ENCODE measurements at regions of chr2 and their contacts with region 1.

Region 1: DNA sequence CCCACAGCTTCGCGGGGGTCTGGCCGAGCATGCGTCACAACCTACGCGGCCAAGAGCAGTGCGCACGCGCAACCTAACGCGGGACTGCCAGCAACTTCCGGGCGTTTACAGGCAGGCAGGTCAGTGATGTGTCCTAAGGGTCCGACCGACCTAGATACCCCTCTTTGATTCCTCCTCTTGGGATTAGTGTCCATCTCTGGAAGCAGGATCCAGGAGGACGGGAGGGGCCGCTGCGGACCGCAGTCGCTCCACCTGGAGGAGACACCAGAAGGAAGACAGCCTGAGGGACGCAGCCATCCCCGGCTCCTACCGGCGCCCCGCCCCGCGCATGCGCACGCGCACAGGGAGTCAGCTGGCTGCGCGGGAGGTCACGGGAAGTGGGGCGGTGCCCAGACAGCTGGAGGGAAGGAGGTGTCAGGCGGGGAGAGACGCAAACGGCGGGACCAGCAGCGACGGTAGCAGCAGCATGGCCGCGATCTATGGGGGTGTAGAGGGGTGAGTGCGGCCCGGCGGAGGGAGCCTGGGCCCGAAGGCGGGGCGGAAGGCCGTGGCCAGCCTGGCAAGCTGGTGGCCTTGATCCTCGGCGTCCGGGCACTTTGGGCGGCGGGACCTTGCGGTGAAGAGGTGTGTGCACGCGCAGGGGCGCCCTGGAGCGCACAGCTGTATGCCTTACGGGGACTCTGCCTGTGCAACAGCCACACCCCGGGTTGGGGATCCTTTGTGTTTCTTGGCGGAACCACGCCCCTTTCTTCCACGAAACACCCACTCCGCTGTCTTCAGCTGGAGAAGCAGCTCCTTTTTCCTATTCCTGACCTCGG is at the start of gene NAGK:
- DNase-seq: peak; percentile 99
- ATAC-seq: peak; percentile 87
- H3K4me3 Mint-ChIP-seq: peak within 1 kb of the TSS; percentile 94
- H3K27ac Mint-ChIP-seq: peak within 1 kb of the TSS; percentile 96
- H3K4me1 Mint-ChIP-seq: peaks cover 35% of the 10 kb centered on the region
- H3K27me3 Mint-ChIP-seq: no peaks in the 10 kb centered on the region
- total RNA-seq, gene NAGK: 87.1 to 93.3 TPM

Region 2: GRCh38 chr2:70793450-70793849 is 275.0 kb before region 1 on chr2:
- POLR2A ChIA-PET with region 1: no interaction called
- DNase-seq: no peak
- ATAC-seq: no peak
- H3K4me3 Mint-ChIP-seq: no peak overlapping the region
- H3K27ac Mint-ChIP-seq: no peak overlapping the region
- H3K4me1 Mint-ChIP-seq: peaks cover 5% of the 10 kb centered on the region
- H3K27me3 Mint-ChIP-seq: peaks cover 42% of the 10 kb centered on the region

Region 3: GRCh38 chr2:71121010-71121409 is 52.6 kb after region 1 on chr2:
- POLR2A ChIA-PET with region 1: interaction called, 13 read pairs
- DNase-seq: no peak
- ATAC-seq: no peak
- H3K4me3 Mint-ChIP-seq: no peak overlapping the region
- H3K27ac Mint-ChIP-seq: no peak overlapping the region
- H3K4me1 Mint-ChIP-seq: no peaks in the 10 kb centered on the region
- H3K27me3 Mint-ChIP-seq: no peaks in the 10 kb centered on the region